PC-3 (cell line): ENCODE measurements at regions of chr12 and their contacts with region 1.

Region 1: DNA sequence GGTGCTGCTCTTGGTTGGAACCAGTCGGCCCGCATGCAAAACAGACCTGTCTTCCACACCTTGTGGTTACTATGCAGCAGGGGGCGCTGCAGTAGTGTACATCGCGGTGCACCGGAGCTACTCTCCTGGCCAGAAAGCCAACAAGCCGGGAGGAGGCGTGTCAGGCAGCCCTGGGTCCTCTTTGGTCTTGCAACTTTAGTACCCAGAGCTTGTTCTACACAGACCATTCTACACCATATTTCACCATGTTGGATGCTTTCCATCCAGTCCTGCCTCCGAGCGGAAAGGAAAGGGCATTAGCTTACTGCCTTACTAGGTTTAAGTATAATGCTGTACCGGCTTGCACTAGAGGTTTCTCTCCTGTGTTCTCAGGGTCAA is 927 bp upstream of the TMTC2 start:
- DNase-seq: peak; percentile 97
- ATAC-seq: peak; percentile 48
- H3K4me3 ChIP-seq: peak overlapping the region; percentile 76
- H3K27ac ChIP-seq: peak overlapping the region; percentile 96
- H3K4me1 ChIP-seq: peaks cover 49% of the 10 kb centered on the region
- H3K27me3 ChIP-seq: no peaks in the 10 kb centered on the region
- CTCF ChIP-seq: peak; percentile 94

Region 2: GRCh38 chr12:82627569-82628198 is 58.1 kb before region 1 on chr12:
- CTCF ChIA-PET with region 1: no interaction called
- POLR2A ChIA-PET with region 1: no interaction called
- intact Hi-C with region 1: no loop called
- DNase-seq: peak; percentile 67
- ATAC-seq: peak; percentile 93
- H3K4me3 ChIP-seq: no peak overlapping the region
- H3K27ac ChIP-seq: no peak overlapping the region
- H3K4me1 ChIP-seq: peaks cover 3% of the 10 kb centered on the region; the same call in 1 of the 2 replicates
- H3K27me3 ChIP-seq: no peaks in the 10 kb centered on the region
- CTCF ChIP-seq: peak; percentile 88

Region 3: GRCh38 chr12:82862069-82862841 is 176.5 kb after region 1 on chr12:
- CTCF ChIA-PET with region 1: no interaction called
- POLR2A ChIA-PET with region 1: no interaction called
- intact Hi-C with region 1: loop called (anchors 1 kb)
- DNase-seq: peak; percentile 80
- ATAC-seq: peak; percentile 77
- H3K4me3 ChIP-seq: no peak overlapping the region
- H3K27ac ChIP-seq: peak overlapping the region; percentile 10
- H3K4me1 ChIP-seq: peaks cover 35% of the 10 kb centered on the region
- H3K27me3 ChIP-seq: no peaks in the 10 kb centered on the region
- CTCF ChIP-seq: no peak

Region 4: GRCh38 chr12:83005534-83006197 is 319.9 kb after region 1 on chr12:
- CTCF ChIA-PET with region 1: no interaction called
- POLR2A ChIA-PET with region 1: no interaction called
- intact Hi-C with region 1: loop called (anchors 5 kb)
- DNase-seq: no peak
- ATAC-seq: no peak
- H3K4me3 ChIP-seq: no peak overlapping the region
- H3K27ac ChIP-seq: no peak overlapping the region
- H3K4me1 ChIP-seq: peaks cover 8% of the 10 kb centered on the region; the same call in 1 of the 2 replicates
- H3K27me3 ChIP-seq: no peaks in the 10 kb centered on the region
- CTCF ChIP-seq: no peak

Region 5: DNA sequence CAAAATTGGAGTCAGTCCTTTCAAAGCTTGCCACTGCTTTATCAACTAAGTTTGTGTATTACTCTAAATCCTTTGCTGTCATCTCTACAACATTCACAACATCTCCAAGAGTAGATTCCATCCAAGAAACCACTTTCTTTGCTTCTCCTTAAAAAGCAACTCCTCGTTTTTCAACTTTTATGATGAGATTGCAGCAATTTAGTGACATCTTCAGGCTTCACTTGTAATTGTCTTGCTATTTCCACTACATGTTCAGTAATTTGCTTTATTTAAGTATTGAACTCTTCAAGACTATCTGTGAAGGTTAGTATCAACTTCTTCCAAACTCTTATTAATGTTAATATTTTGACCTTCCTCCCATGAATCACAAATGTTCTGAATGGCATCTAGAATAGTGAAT is 748.8 kb after region 1 on chr12:
- CTCF ChIA-PET with region 1: no interaction called
- POLR2A ChIA-PET with region 1: interaction called, 3 read pairs
- intact Hi-C with region 1: loop called (anchors 1 kb)
- DNase-seq: peak; percentile 33
- ATAC-seq: no peak
- H3K4me3 ChIP-seq: no peak overlapping the region
- H3K27ac ChIP-seq: no peak overlapping the region
- H3K4me1 ChIP-seq: no peaks in the 10 kb centered on the region
- H3K27me3 ChIP-seq: no peaks in the 10 kb centered on the region
- CTCF ChIP-seq: peak; percentile 37; the same call in 1 of the 2 replicates

Region 6: GRCh38 chr12:84397263-84397662 is 1711.5 kb after region 1 on chr12:
- CTCF ChIA-PET with region 1: no interaction called
- POLR2A ChIA-PET with region 1: no interaction called
- intact Hi-C with region 1: loop called (anchors 5 kb)
- DNase-seq: peak; percentile 56
- ATAC-seq: no peak
- H3K4me3 ChIP-seq: no peak overlapping the region
- H3K27ac ChIP-seq: no peak overlapping the region
- H3K4me1 ChIP-seq: no peaks in the 10 kb centered on the region
- H3K27me3 ChIP-seq: no peaks in the 10 kb centered on the region
- CTCF ChIP-seq: peak; percentile 70